ENCODE measurements at regions of chr1 and their contacts with region 1.

Region 1: DNA sequence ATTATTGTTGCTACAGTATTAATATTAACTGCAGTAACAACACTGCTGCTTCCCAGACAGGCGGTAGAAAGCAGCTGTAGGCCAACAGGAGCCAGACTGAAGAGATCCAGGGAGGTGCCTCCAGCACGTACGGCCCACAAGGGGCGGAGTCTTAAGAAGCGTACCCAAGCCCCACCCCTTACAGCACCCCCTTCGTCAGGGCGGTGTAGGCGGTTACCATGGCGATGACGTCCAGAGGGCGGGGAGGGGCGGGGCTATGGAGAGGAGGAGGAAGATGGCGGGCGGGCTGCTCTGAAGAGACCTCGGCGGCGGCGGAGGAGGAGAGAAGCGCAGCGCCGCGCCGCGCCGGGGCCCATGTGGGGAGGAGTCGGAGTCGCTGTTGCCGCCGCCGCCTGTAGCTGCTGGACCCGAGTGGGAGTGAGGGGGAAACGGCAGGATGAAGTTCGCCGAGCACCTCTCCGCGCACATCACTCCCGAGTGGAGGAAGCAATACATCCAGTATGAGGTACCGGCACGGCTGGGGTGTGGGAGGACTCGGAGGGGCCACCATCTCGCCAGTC is at the start of gene XPR1:
- DNase-seq: peak; percentile 97
- H3K4me3 ChIP-seq: peak within 1 kb of the TSS; percentile 83 to 99 (median 96)
- H3K27ac ChIP-seq: peak within 1 kb of the TSS; percentile 64
- H3K4me1 ChIP-seq: peaks cover 13% of the 10 kb centered on the region
- H3K27me3 ChIP-seq: no peaks in the 10 kb centered on the region
- CTCF ChIP-seq: peak; percentile 13 to 38
- total RNA-seq, gene XPR1: 44.1 to 109 TPM

Region 2: GRCh38 chr1:180533266-180533987 is 98.4 kb before region 1 on chr1:
- CTCF ChIA-PET with region 1: no interaction called
- dilution Hi-C with region 1: no loop called
- in situ Hi-C with region 1: loop called in 1 of 2 experiments (anchors 5 kb)
- intact Hi-C with region 1: loop called (anchors 1 kb)
- DNase-seq: peak; percentile 33
- H3K4me3 ChIP-seq: no peak overlapping the region
- H3K27ac ChIP-seq: no peak overlapping the region
- H3K4me1 ChIP-seq: peaks cover 15% of the 10 kb centered on the region
- H3K27me3 ChIP-seq: no peaks in the 10 kb centered on the region
- CTCF ChIP-seq: peak; percentile 43 to 64

Region 3: GRCh38 chr1:180586671-180587155 is 45.1 kb before region 1 on chr1:
- CTCF ChIA-PET with region 1: no interaction called
- dilution Hi-C with region 1: no loop called
- in situ Hi-C with region 1: no loop called
- intact Hi-C with region 1: loop called (anchors 2 kb)
- DNase-seq: peak; percentile 84
- H3K4me3 ChIP-seq: no peak overlapping the region
- H3K27ac ChIP-seq: peak overlapping the region; percentile 85
- H3K4me1 ChIP-seq: peaks cover 23% of the 10 kb centered on the region
- H3K27me3 ChIP-seq: no peaks in the 10 kb centered on the region
- CTCF ChIP-seq: no peak

Region 4: DNA sequence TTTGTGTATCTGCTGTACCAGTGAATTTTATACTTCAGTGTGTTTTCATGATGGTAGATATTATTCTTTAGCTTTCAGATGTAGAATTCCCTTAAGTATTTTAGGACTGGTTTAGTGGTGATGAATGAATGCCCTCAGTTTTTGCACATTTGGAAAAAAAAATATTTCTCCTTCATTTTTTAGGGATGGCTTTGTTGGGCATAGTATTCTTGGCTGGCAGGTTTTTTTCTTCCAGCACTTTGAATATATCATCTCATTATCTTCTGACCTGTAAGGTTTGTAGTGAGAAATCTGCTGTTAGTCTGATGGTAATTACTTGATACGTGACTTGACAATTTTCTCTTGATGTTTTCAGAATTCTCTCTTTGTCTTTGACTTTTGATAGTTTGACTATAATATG is 66.7 kb after region 1 on chr1:
- CTCF ChIA-PET with region 1: no interaction called
- dilution Hi-C with region 1: no loop called
- in situ Hi-C with region 1: no loop called
- intact Hi-C with region 1: no loop called
- DNase-seq: no peak
- H3K4me3 ChIP-seq: no peak overlapping the region
- H3K27ac ChIP-seq: no peak overlapping the region
- H3K4me1 ChIP-seq: no peaks in the 10 kb centered on the region
- H3K27me3 ChIP-seq: no peaks in the 10 kb centered on the region
- CTCF ChIP-seq: no peak

Region 5: GRCh38 chr1:180863158-180863775 is 231.4 kb after region 1 on chr1:
- CTCF ChIA-PET with region 1: no interaction called
- dilution Hi-C with region 1: no loop called
- in situ Hi-C with region 1: loop called in 1 of 2 experiments (anchors 25 kb)
- intact Hi-C with region 1: loop called (anchors 5 kb)
- DNase-seq: peak; percentile 32
- H3K4me3 ChIP-seq: no peak overlapping the region
- H3K27ac ChIP-seq: no peak overlapping the region
- H3K4me1 ChIP-seq: peaks cover 9% of the 10 kb centered on the region
- H3K27me3 ChIP-seq: no peaks in the 10 kb centered on the region
- CTCF ChIP-seq: peak; percentile 51 to 62

Region 6: DNA sequence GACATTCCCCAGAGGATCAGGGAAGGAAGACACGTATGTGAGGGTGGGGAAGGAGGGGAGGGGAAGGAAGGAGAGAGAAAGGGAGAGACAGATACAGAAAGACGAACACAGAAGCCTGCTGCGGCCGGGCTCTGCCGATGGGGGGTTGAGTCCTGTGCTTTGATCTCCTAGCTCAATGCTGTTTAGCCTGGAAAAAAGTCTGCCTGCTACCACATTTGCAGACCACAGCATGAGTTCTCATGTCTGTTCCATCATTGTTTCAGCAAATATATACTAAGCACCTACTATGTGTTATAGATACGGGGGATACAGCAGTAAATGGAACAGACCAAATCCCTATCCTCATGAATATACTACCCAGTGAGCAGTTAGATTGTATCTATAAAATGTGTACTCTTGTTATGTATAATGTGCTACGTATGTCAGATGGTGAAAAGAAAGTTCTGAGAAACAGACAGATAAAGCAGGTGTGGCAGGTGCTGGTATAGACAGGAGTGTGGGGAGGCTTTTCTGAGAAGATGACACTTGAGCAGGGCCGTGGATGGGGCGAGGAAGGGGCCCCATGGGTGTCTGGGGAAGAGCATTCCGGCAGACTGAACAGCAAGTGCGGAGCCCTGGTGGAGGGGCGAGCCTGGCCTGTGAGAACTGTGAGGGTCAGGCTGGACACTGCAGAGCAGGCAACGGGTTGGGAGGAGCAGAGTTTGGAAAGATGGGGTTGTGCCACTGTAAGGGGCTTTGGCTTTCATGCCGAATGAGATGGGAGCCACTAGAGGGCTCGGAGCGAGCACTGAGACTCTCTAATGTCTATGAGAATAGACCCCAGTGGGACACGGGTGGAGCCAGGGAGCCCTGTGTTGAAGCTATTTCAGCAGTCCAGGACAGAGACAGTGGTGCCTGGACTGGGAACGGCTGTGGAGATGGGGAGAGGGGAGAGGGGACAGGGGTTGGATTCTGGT is 315.0 kb after region 1 on chr1:
- CTCF ChIA-PET with region 1: no interaction called
- dilution Hi-C with region 1: no loop called
- in situ Hi-C with region 1: no loop called
- intact Hi-C with region 1: no loop called
- DNase-seq: no peak
- H3K4me3 ChIP-seq: no peak overlapping the region
- H3K27ac ChIP-seq: no peak overlapping the region
- H3K4me1 ChIP-seq: no peaks in the 10 kb centered on the region
- H3K27me3 ChIP-seq: no peaks in the 10 kb centered on the region
- CTCF ChIP-seq: no peak

Region 7: DNA sequence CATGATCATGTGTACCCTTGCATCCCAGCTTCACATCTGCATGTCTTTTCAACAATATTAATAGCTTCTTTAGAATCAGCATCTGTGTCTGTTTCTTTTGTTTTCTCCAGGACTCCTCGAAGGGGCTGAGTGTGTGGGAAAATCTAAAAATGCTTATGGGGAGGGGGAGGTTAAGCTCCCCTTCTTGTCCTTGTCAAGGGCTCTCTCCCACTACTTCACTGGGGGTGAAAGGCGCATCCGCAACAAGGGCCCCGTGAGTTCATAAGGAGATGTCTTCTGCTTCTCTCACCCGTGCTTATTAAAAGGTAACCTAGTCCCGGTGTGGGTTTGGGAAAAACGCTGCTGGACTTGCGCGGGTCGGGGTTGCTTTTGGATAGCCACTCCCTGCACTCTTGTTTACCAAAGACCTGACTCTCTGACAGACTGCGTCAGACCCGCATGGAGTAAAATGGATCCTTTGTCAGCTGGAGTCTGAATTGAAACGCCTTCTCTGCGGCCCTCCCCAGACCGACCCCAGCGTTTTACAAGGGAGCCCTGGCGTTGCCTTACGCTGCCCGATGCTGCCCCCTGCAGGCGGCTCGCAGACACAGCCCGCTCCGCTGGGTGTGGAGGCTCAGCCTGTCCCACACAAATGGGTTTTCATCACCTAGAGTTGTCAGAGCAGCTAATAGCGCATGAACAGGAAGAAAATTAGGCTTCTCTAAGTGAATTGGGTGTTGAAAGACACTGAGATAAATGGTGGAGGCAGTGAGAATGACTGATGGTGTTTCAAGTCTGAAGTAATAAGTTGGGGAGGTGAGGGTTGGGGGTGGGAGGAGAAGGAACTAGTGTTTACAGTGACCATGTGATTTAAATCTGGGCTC is 510.5 kb after region 1 on chr1:
- CTCF ChIA-PET with region 1: no interaction called
- dilution Hi-C with region 1: no loop called
- in situ Hi-C with region 1: loop called in 1 of 2 experiments (anchors 25 kb)
- intact Hi-C with region 1: loop called (anchors 10 kb)
- DNase-seq: peak; percentile 84
- H3K4me3 ChIP-seq: peak overlapping the region in 1 of 3 experiments; percentile 33
- H3K27ac ChIP-seq: peak overlapping the region; percentile 63
- H3K4me1 ChIP-seq: peaks cover 49% of the 10 kb centered on the region
- H3K27me3 ChIP-seq: no peaks in the 10 kb centered on the region
- CTCF ChIP-seq: peak; percentile 95 to 97

Measured in mammary epithelial cell (primary cell).